Activated CD4-positive, alpha-beta memory T cell treated with anti-CD3 and anti-CD28 coated beads for 36 hours (primary cell): ENCODE measurements at regions of chr17 and their contacts with region 1.

Region 1: GRCh38 chr17:59846394-59847165 is 46.2 kb downstream of the TUBD1 start:
- DNase-seq: peak; percentile 31
- H3K4me3 Mint-ChIP-seq: peak overlapping the region; percentile 60
- H3K27ac Mint-ChIP-seq: peak overlapping the region; percentile 100
- H3K4me1 Mint-ChIP-seq: peaks cover 68% of the 10 kb centered on the region
- H3K27me3 Mint-ChIP-seq: peaks cover 2% of the 10 kb centered on the region

Region 2: DNA sequence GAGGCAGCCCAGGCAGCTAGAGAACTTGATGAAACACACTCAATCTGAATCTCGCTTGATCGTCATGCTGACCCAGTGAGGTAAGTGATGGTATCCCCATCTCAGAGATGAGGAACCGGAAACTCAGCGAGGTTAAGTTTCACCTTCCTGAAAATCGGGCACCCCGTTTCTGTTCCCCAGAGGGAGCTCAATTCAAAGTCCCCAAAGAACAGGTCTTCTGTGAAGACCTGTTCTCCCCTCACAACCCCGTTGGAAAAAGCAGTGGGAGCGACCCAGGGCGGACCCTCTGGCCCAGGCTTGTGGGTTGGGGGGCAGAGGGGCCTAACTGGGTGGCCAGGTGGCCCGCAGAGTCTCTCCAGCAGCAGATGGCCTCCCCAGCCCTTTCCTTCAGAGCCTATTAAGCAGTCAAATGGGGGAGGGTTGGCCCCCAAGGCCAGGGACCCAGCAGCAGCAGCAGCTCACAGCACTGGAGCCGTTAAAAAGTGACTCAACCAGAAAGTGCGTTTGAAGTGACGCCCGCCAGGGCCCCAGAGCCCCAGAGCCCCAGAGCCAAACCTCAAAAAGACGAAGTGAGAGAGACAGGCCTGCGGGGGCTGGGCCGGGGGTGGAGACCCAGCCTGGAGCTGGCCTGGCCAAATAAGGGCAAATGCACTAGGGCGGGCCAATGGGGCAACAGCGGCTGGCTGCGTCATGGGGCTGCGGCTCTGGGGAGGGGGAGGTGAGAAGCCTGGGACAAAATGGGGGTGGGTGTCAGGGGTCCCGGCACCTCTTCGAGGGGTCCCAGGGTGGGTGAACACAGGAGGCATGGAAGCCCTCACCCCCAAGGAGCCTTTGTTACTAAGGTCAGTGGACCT is 1508.8 kb before region 1 on chr17:
- CTCF ChIA-PET with region 1: no interaction called
- POLR2A ChIA-PET with region 1: no interaction called
- intact Hi-C with region 1: loop called (anchors 5 kb)
- DNase-seq: peak; percentile 98
- H3K4me3 Mint-ChIP-seq: peak overlapping the region; percentile 92
- H3K27ac Mint-ChIP-seq: peak overlapping the region; percentile 98
- H3K4me1 Mint-ChIP-seq: peaks cover 22% of the 10 kb centered on the region
- H3K27me3 Mint-ChIP-seq: no peaks in the 10 kb centered on the region

Region 3: DNA sequence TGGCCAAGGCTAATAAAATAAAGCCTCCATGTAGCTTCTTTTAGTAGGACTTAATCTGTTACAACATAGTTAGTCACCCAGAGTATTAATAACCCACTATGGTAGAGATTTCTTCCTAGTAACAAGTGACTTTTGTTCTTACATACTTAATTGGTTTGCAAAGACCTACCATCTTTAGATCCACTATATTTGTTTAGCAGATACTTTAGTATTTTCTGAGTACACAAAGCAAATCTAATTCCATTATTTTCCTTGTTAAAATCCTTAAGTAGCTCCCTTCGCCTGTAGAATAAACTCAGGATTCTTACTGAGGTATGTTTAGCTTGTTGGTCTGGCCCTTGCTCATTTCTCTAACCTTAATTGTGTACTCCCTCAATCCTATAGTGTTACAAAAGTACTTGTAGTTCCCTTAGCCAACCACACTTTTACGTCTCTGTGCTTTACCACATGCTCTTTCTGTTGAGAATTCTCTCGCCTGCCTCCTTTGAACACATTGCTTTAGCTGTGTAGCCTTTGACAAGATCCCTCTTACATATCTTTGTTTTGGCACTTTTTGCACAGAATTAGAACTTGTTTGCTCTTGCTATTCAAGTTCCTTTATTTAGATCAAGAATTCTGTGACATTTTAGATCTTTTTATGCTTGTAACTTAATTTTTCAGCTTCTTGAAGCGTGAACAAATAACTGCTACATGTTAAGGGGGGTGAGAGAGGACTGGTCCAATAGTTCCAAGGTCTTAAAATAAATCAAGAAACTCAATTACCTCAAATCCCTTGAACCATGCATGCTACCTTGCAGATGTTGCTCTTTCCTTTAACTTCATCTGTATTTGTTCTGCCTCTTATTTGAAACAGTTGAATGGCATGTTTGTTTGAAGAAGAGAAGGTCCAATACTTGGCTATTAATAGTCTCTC is 203.1 kb before region 1 on chr17:
- CTCF ChIA-PET with region 1: no interaction called
- POLR2A ChIA-PET with region 1: no interaction called
- intact Hi-C with region 1: no loop called
- DNase-seq: no peak
- H3K4me3 Mint-ChIP-seq: no peak overlapping the region
- H3K27ac Mint-ChIP-seq: no peak overlapping the region
- H3K4me1 Mint-ChIP-seq: peaks cover 43% of the 10 kb centered on the region
- H3K27me3 Mint-ChIP-seq: no peaks in the 10 kb centered on the region

Region 4: DNA sequence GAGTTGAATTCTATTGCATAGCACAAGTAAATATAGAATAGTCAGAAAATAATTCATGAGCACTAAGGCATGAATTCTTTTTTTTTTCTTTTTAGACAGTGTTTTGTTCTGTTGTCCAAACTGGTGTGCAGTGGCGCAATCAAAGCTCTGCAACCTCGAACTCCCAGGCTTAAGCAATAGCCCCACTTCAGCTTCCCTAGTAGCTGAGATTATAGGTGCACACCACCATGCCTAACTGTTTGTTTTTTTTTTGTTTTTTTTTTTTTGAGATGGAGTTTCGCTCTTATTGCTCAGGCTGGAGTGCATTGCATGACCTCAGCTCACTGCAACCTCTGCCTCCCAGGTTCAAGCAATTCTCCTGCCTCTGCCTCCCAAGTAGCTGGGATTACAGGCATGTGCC is 29.5 kb after region 1 on chr17:
- CTCF ChIA-PET with region 1: no interaction called
- POLR2A ChIA-PET with region 1: no interaction called
- intact Hi-C with region 1: no loop called
- DNase-seq: no peak
- H3K4me3 Mint-ChIP-seq: no peak overlapping the region
- H3K27ac Mint-ChIP-seq: no peak overlapping the region
- H3K4me1 Mint-ChIP-seq: no peaks in the 10 kb centered on the region
- H3K27me3 Mint-ChIP-seq: no peaks in the 10 kb centered on the region

Region 5: GRCh38 chr17:59972778-59973177 is 126.2 kb after region 1 on chr17:
- CTCF ChIA-PET with region 1: no interaction called
- POLR2A ChIA-PET with region 1: no interaction called
- intact Hi-C with region 1: no loop called
- DNase-seq: no peak
- H3K4me3 Mint-ChIP-seq: no peak overlapping the region
- H3K27ac Mint-ChIP-seq: no peak overlapping the region
- H3K4me1 Mint-ChIP-seq: no peaks in the 10 kb centered on the region
- H3K27me3 Mint-ChIP-seq: no peaks in the 10 kb centered on the region